ENCODE measurements at regions of chr11 and their contacts with region 1.

Region 1: GRCh38 chr11:95089620-95090542 is at the start of gene ENDOD1:
- DNase-seq: peak; percentile 18 to 90
- H3K4me3 ChIP-seq: peak within 1 kb of the TSS; percentile 82 to 97
- H3K27ac ChIP-seq: peak within 1 kb of the TSS; percentile 90 to 94
- H3K4me1 ChIP-seq: peaks cover 8 to 34% of the 10 kb centered on the region in 2 donors
- H3K27me3 ChIP-seq: no peaks in the 10 kb centered on the region
- CTCF ChIP-seq: peak in 1 of 3 experiments; percentile 17
- total RNA-seq, gene ENDOD1: 60.2 TPM

Region 2: DNA sequence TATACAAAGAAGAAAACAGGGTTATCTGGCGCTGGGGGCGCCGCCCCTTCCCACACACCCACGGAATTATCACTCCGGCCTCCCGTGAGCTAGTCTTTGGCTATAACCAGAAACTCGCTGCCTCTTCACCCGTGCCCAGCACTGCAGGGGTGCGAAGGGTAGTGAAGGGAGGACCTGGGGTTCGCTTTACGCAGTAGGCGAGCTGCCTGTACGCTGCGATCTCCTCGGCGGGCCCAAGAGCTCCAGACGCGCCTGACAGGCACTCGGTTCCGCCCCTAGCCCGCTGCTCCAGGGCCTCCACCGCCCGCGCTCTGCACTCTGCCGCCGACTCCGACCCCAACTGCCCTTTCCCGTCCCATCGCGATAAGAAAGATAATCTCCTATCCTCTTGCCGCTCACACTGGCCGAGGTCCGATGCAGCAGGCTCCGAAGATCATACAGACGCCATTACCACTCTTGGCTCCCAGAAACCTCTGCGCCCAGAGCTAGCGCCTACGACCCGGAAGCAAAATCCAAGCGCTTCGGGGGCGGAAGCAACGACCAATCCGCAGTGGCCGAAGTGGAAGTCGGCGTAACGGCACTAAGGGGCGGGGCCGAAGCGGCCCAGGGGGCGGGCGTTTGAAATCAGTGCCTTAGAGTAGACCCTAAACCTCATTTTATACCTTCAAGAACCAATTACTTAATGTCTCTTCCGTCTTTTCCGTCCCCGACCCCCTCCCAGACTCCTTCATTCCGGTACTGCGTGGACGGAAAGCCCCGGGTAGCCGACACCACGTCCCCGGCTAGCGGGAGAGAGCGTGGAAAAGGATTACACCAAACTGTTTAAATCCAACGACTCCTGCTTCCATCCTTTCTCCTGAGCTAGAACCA is 116.5 kb before region 1 on chr11 and contains the starts of genes CWC15 and KDM4D:
- intact Hi-C with region 1: loop called (anchors 5 kb)
- DNase-seq: peak; percentile 86 to 96
- H3K4me3 ChIP-seq: peak within 1 kb of the TSS; percentile 69 to 96
- H3K27ac ChIP-seq: peak within 1 kb of the TSS; percentile 76 to 82
- H3K4me1 ChIP-seq: peaks cover 0 to 8% of the 10 kb centered on the region in 2 donors
- H3K27me3 ChIP-seq: no peaks in the 10 kb centered on the region
- CTCF ChIP-seq: no peak
- total RNA-seq, gene CWC15: 16.2 TPM
- total RNA-seq, gene KDM4D: not detected

Region 3: DNA sequence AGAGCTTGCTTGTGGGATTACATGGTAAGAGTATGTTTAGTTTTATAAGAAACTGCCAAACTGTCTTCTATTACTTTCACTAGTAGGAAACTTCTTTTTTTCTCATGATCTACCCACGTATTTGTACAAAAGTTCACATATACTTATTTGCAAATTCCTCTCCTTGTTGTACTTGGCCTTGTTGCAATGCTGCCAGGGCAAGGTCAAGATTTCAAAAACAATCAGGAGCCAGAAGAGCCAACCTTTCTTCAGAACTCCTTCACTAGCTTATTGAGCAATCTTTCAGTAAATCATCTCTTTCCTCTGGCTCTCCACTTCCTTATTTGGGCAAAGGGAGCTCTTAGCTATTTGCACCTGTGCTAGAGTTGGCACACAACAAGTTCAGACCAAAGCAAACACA is 13.5 kb before region 1 on chr11:
- intact Hi-C with region 1: loop called (anchors 1 kb)
- DNase-seq: peak in 1 of 2 donors; percentile 84
- H3K4me3 ChIP-seq: no peak overlapping the region
- H3K27ac ChIP-seq: peak overlapping the region; percentile 80 to 85
- H3K4me1 ChIP-seq: peaks cover 15 to 46% of the 10 kb centered on the region in 2 donors
- H3K27me3 ChIP-seq: no peaks in the 10 kb centered on the region
- CTCF ChIP-seq: no peak

Region 4: DNA sequence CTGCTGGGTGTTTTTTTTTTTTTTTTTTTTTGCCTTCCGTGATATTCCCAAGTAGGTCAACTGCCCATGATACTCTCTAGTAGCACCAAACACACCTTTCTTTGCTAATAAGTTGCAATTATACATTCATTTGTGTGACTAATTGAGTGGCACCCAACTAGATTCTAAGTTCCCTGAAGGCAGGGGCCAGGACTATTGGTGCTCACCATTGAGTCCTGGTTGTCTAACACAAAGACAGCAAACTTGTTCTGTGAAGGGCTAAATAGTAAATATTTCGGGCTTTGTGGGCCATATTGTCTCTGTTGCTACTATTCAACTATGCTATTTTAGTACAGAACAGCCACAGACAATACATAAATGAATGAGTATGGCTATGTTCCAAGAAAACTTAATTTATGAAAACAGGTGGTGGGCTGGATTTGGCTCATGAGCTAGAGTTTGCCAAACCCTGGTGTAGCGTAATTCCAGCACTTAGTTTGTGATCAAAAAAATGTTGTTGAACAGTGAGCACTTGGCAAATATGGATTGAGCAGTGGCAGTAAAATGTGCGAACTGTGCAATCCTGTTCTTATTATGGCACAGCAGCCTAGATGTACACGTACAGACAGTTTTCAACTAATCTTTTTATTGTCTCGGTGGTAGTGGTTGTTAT is 11.1 kb after region 1 on chr11:
- intact Hi-C with region 1: no loop called
- DNase-seq: no peak
- H3K4me3 ChIP-seq: no peak overlapping the region
- H3K27ac ChIP-seq: no peak overlapping the region
- H3K4me1 ChIP-seq: peaks cover 3 to 5% of the 10 kb centered on the region in 2 donors
- H3K27me3 ChIP-seq: no peaks in the 10 kb centered on the region
- CTCF ChIP-seq: no peak

Region 5: GRCh38 chr11:95567685-95568084 is 477.8 kb after region 1 on chr11:
- intact Hi-C with region 1: loop called (anchors 10 kb)
- DNase-seq: no peak
- H3K4me3 ChIP-seq: no peak overlapping the region
- H3K27ac ChIP-seq: peak overlapping the region; percentile 65 to 74
- H3K4me1 ChIP-seq: peaks cover 7 to 43% of the 10 kb centered on the region in 2 donors
- H3K27me3 ChIP-seq: no peaks in the 10 kb centered on the region
- CTCF ChIP-seq: no peak

Region 6: DNA sequence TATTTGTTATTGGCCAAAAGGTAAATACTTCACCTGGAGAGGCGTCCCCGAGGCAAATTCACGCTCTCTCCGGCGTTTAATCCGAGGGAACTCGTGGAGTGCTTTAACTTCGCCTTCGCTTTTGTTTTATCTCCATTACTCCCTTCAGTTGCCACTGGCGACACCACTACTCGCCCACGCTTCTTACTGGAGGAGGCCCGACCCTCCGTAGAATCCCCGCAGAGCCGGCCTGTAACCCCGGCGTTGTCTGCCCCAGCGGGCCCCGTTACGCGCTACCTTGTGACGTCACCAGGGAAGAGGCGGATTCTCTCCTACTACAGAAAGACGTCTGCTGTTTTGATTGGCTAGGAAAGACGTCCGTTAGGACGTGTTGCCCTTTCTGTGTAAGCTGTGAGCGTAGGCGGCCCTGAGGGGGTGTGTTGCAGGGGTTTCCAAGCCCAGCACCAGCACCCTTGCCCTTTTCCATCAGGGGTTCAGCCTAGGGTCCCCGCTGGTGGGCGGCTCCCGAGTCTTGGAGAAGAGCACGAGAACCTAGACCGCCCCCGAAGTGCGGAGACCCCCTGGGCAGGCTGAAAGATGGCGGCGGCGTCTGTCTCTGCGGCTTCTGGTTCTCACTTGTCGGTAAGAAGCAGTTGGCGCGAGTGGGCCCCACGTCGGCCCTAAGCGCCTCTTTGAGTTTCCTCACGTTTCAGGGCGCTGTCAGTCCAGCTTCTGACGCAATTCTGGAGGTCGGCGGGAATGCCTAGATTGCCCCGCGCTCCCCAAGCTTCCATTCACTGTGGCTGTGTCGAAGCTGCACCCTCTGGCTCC is 700.4 kb after region 1 on chr11 and contains the start of gene CEP57:
- intact Hi-C with region 1: loop called (anchors 2 kb)
- DNase-seq: peak; percentile 86 to 99
- H3K4me3 ChIP-seq: peak within 1 kb of the TSS; percentile 95 to 98
- H3K27ac ChIP-seq: peak within 1 kb of the TSS; percentile 91 to 100
- H3K4me1 ChIP-seq: peaks cover 0 to 22% of the 10 kb centered on the region in 2 donors
- H3K27me3 ChIP-seq: no peaks in the 10 kb centered on the region
- CTCF ChIP-seq: no peak
- total RNA-seq, gene CEP57: 5.4 TPM